Prostate gland (tissue), 2 donors: ENCODE measurements at regions of chr5 and their contacts with region 1.

Region 1: DNA sequence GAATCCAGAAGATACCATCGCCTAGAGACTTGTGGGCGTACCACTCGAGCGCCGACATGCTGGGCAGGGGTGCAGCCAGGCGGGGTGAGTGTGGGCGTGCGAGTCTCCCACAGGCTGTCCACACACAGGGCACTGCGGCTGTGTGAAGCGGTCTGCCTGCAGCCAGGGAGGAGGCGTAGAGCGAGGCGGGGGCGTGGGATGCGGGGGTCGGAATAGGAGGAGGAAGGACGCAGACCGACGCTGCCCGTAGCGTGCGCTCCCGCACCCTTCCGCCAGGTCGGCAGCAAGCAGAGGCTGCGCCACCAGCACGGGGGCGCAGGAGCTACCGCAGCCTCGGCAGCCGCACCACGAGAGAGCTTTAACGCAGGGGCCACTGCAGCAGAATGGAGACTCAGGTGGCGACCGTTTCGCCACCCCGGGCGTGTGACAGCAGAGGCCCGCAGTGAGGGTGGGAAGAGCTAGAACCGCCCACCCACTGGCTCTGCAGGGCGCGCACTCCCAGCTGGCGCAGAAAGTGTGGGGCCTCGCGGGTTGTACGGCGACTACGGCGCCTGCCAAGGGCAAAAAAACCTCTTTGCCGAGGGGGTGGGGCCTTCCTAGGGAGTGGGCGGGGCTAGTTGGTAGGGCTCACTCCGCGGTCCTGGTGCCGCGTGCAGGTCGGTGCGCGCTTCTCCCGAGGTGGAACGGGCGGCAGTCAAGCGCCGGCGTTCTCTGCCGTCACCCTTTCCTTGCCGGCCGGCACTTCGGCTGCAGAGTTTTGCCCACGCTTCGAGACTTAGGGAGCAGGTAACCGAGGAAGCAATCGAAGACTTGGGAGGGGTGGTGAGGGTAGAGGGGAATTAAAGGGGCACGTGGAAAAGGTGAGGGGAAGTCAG is at the starts of genes MBLAC2 and POLR3G:
- DNase-seq: peak; percentile 94
- H3K4me3 ChIP-seq: peak within 1 kb of the TSS; percentile 71 to 88
- H3K27ac ChIP-seq: peak within 1 kb of the TSS; percentile 74 to 75
- H3K4me1 ChIP-seq: no peaks in the 10 kb centered on the region
- H3K27me3 ChIP-seq: no peaks in the 10 kb centered on the region
- CTCF ChIP-seq: peak in 3 of 4 experiments; percentile 28 to 63 (median 55)
- POLR2A ChIP-seq: peak; percentile 78
- total RNA-seq, gene MBLAC2: 3.9 to 12.9 TPM
- total RNA-seq, gene POLR3G: 0.18 to 6.4 TPM

Region 2: GRCh38 chr5:90409318-90410177 is 64.9 kb before region 1 on chr5 and contains the start of gene CETN3:
- intact Hi-C with region 1: loop called (anchors 2 kb)
- DNase-seq: peak; percentile 96
- H3K4me3 ChIP-seq: peak within 1 kb of the TSS; percentile 62 to 91
- H3K27ac ChIP-seq: peak within 1 kb of the TSS; percentile 91 to 98
- H3K4me1 ChIP-seq: no peaks in the 10 kb centered on the region
- H3K27me3 ChIP-seq: no peaks in the 10 kb centered on the region
- CTCF ChIP-seq: no peak
- POLR2A ChIP-seq: peak; percentile 87
- total RNA-seq, gene CETN3: 13.3 to 29.0 TPM